ENCODE measurements at regions of chr11 and their contacts with region 1.

Region 1: GRCh38 chr11:126268708-126269579 is at the starts of genes FOXRED1 and SRPRA:
- DNase-seq: peak; percentile 100
- ATAC-seq: peak; percentile 99 to 100 (median 100)
- H3K4me3 ChIP-seq: peak within 1 kb of the TSS; percentile 63 to 99 (median 78)
- H3K27ac ChIP-seq: peak within 1 kb of the TSS; percentile 56 to 97 (median 90)
- H3K4me1 ChIP-seq: peaks cover 0 to 26% (median 15%) of the 10 kb centered on the region in 12 donors
- H3K27me3 ChIP-seq: no peaks in the 10 kb centered on the region
- CTCF ChIP-seq: no peak
- POLR2A ChIP-seq: peak in 1 of 2 donors; percentile 78
- total RNA-seq, gene FOXRED1: 22.0 to 49.1 (median 31.8) TPM
- total RNA-seq, gene SRPRA: 65.0 to 90.8 (median 79.3) TPM

Region 2: GRCh38 chr11:125923012-125923579 is 345.8 kb before region 1 on chr11:
- intact Hi-C with region 1: loop called in 1 of 10 experiments (anchors 5 kb)
- DNase-seq: peak in 4 of 5 donors; percentile 52 to 61 (median 57)
- ATAC-seq: peak; percentile 69 to 89 (median 76)
- H3K4me3 ChIP-seq: no peak overlapping the region
- H3K27ac ChIP-seq: no peak overlapping the region
- H3K4me1 ChIP-seq: no peaks in the 10 kb centered on the region
- H3K27me3 ChIP-seq: peaks cover 0 to 13% (median 0%) of the 10 kb centered on the region in 9 donors
- CTCF ChIP-seq: peak; percentile 65 to 87 (median 79)
- POLR2A ChIP-seq: no peak

Region 3: GRCh38 chr11:126211235-126212088 is 57.5 kb before region 1 on chr11 and contains the starts of genes FAM118B and RPUSD4:
- intact Hi-C with region 1: loop called (anchors 1 to 10 kb)
- DNase-seq: peak; percentile 98 to 99 (median 99)
- ATAC-seq: peak; percentile 97 to 99 (median 99)
- H3K4me3 ChIP-seq: peak within 1 kb of the TSS; percentile 52 to 97 (median 80)
- H3K27ac ChIP-seq: peak within 1 kb of the TSS in 11 of 12 donors; percentile 63 to 86 (median 72)
- H3K4me1 ChIP-seq: peaks cover 0 to 43% (median 24%) of the 10 kb centered on the region in 12 donors
- H3K27me3 ChIP-seq: no peaks in the 10 kb centered on the region
- CTCF ChIP-seq: no peak
- POLR2A ChIP-seq: peak; percentile 44 to 94
- total RNA-seq, gene FAM118B: 19.0 to 41.0 (median 23.6) TPM
- total RNA-seq, gene RPUSD4: 21.0 to 50.0 (median 34.2) TPM

Region 4: DNA sequence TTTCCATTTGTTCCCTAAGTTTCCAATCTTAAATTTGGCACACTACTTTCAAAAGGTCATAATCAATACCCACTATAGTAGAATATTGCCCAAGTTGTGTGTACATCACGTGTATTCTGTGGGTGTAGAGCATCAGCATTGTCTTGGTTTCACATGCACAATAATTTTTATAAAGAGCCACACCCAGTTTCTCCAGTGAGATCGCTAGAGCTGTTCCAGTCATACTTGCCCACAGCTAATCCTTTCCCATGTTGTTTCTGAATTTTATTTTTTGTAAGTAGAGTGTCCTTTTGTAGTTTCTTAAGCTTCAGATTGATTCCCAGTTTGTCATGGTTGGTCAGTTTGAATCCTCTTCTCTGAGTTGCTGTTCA is 43.7 kb before region 1 on chr11:
- intact Hi-C with region 1: no loop called
- DNase-seq: no peak
- ATAC-seq: no peak
- H3K4me3 ChIP-seq: no peak overlapping the region
- H3K27ac ChIP-seq: peak overlapping the region in 3 of 12 donors; percentile 18 to 57 (median 29)
- H3K4me1 ChIP-seq: peaks cover 0 to 15% (median 5%) of the 10 kb centered on the region in 12 donors
- H3K27me3 ChIP-seq: no peaks in the 10 kb centered on the region
- CTCF ChIP-seq: no peak
- POLR2A ChIP-seq: no peak

Region 5: GRCh38 chr11:126282736-126283591 is 14.0 kb after region 1 on chr11 and contains the start of gene TIRAP:
- intact Hi-C with region 1: loop called in 2 of 10 experiments (anchors 1 to 2 kb)
- DNase-seq: peak; percentile 73 to 88 (median 77)
- ATAC-seq: peak; percentile 76 to 92 (median 92)
- H3K4me3 ChIP-seq: peak within 1 kb of the TSS; percentile 59 to 88 (median 80)
- H3K27ac ChIP-seq: peak within 1 kb of the TSS; percentile 76 to 97 (median 92)
- H3K4me1 ChIP-seq: peaks cover 0 to 45% (median 9%) of the 10 kb centered on the region in 12 donors
- H3K27me3 ChIP-seq: no peaks in the 10 kb centered on the region
- CTCF ChIP-seq: peak in 2 of 12 donors; percentile 18 to 29
- POLR2A ChIP-seq: peak in 1 of 2 donors; percentile 67
- total RNA-seq, gene TIRAP: 5.3 to 9.5 (median 7.6) TPM